Sigmoid colon (tissue), 7 donors: ENCODE measurements at regions of chr7 and their contacts with region 1.

Region 1: DNA sequence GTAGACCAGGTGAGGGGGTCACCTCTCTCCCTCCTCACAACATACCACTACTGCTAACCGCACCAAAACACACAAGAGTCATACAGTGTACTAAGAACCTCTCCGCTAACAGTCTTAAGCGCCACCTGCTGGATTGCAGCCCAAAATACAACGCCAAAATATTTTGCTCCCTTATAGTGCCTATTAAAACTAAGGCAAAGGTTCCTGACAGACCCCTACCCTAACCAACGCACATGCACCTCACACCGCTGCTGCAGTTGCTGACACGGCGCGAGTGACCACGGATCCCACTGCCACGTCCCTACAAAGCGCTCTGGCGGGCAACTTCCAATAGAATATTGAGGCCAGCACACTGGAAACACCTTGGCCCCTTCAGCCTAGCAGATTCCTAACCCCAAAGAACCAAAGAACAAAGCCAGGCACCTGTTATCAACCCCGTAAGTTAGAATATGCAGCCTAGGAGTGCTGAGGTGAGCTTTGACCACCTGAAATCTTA is 563.6 kb upstream of the SEMA3D start:
- DNase-seq: no peak
- H3K4me3 ChIP-seq: no peak overlapping the region
- H3K27ac ChIP-seq: no peak overlapping the region
- H3K4me1 ChIP-seq: no peaks in the 10 kb centered on the region
- H3K27me3 ChIP-seq: no peaks in the 10 kb centered on the region
- CTCF ChIP-seq: peak in 2 of 4 experiments; percentile 31 to 34
- EP300 ChIP-seq: no peak
- POLR2A ChIP-seq: no peak

Region 2: DNA sequence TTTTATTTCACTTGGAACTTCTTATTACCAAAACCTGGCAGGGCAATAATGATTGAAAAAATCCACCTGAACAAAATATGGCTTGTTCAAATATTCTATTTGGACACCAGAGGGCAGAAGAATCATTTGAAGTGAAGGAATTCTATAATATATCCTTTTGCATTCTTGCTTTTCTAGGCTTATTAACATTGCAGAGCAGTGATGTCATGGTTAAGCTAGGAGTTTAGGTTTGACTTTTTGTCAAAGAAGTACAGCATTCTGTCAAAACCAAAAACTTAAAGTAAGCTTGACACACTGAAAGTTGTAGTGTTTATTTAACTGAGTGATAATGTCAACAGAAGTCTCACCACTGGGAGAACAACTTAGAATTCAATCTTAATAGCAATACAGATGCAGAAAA is 719.6 kb before region 1 on chr7:
- intact Hi-C with region 1: loop called (anchors 10 kb)
- DNase-seq: no peak
- H3K4me3 ChIP-seq: no peak overlapping the region
- H3K27ac ChIP-seq: no peak overlapping the region
- H3K4me1 ChIP-seq: peaks cover 0 to 4% (median 0%) of the 10 kb centered on the region in 4 donors
- H3K27me3 ChIP-seq: no peaks in the 10 kb centered on the region
- CTCF ChIP-seq: peak; percentile 9 to 47 (median 18)
- EP300 ChIP-seq: no peak
- POLR2A ChIP-seq: no peak

Region 3: DNA sequence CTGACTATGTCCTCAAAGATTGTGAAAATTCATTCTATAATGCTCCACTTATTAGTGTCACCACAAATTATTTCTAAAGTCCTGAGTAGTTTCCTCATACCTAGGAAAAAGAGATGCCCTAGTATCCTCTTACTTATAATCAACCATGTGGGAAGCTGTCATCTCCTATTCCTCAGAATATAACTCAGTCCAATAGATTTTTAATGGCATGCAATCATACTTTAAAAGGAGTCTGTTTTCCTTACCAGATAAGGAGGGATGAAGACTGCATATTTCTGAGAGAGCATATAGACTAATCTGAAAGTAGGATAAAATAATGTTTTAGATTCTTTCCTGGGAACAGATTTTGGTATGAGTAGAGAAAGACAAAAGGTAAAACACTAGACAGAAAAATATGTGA is 165.5 kb after region 1 on chr7:
- intact Hi-C with region 1: no loop called
- DNase-seq: no peak
- H3K4me3 ChIP-seq: no peak overlapping the region
- H3K27ac ChIP-seq: no peak overlapping the region
- H3K4me1 ChIP-seq: no peaks in the 10 kb centered on the region
- H3K27me3 ChIP-seq: no peaks in the 10 kb centered on the region
- CTCF ChIP-seq: no peak
- EP300 ChIP-seq: no peak
- POLR2A ChIP-seq: no peak